ENCODE measurements at regions of chr7 and their contacts with region 1.

Region 1: GRCh38 chr7:74206589-74207120 is 3.2 kb upstream of the LAT2 start:
- DNase-seq: peak in 2 of 3 donors; percentile 67 to 75
- H3K4me3 ChIP-seq: peak overlapping the region in 4 of 7 experiments; percentile 25 to 72 (median 44)
- H3K27ac ChIP-seq: no peak overlapping the region
- H3K4me1 ChIP-seq: peaks cover 3 to 60% (median 47%) of the 10 kb centered on the region in 4 experiments
- H3K27me3 ChIP-seq: no peaks in the 10 kb centered on the region

Region 2: GRCh38 chr7:74068393-74069085 is 138.1 kb before region 1 on chr7:
- CTCF ChIA-PET with region 1: interaction called, 30 read pairs
- POLR2A ChIA-PET with region 1: no interaction called
- DNase-seq: no peak
- H3K4me3 ChIP-seq: no peak overlapping the region
- H3K27ac ChIP-seq: no peak overlapping the region
- H3K4me1 ChIP-seq: no peaks in the 10 kb centered on the region
- H3K27me3 ChIP-seq: no peaks in the 10 kb centered on the region

Region 3: GRCh38 chr7:74217455-74218342 is 11.0 kb after region 1 on chr7:
- CTCF ChIA-PET with region 1: interaction called, 31 read pairs
- POLR2A ChIA-PET with region 1: interaction called, 5 read pairs
- DNase-seq: peak; percentile 88 to 97 (median 96)
- H3K4me3 ChIP-seq: peak overlapping the region in 3 of 7 experiments; percentile 4 to 45 (median 30)
- H3K27ac ChIP-seq: peak overlapping the region; percentile 84 to 88
- H3K4me1 ChIP-seq: peaks cover 6 to 64% (median 58%) of the 10 kb centered on the region in 4 experiments
- H3K27me3 ChIP-seq: no peaks in the 10 kb centered on the region

Region 4: GRCh38 chr7:74236284-74236683 is 29.6 kb after region 1 on chr7:
- CTCF ChIA-PET with region 1: interaction called, 11 read pairs
- POLR2A ChIA-PET with region 1: no interaction called
- DNase-seq: no peak
- H3K4me3 ChIP-seq: no peak overlapping the region
- H3K27ac ChIP-seq: no peak overlapping the region
- H3K4me1 ChIP-seq: peaks cover 0 to 10% (median 3%) of the 10 kb centered on the region in 4 experiments
- H3K27me3 ChIP-seq: no peaks in the 10 kb centered on the region

Region 5: DNA sequence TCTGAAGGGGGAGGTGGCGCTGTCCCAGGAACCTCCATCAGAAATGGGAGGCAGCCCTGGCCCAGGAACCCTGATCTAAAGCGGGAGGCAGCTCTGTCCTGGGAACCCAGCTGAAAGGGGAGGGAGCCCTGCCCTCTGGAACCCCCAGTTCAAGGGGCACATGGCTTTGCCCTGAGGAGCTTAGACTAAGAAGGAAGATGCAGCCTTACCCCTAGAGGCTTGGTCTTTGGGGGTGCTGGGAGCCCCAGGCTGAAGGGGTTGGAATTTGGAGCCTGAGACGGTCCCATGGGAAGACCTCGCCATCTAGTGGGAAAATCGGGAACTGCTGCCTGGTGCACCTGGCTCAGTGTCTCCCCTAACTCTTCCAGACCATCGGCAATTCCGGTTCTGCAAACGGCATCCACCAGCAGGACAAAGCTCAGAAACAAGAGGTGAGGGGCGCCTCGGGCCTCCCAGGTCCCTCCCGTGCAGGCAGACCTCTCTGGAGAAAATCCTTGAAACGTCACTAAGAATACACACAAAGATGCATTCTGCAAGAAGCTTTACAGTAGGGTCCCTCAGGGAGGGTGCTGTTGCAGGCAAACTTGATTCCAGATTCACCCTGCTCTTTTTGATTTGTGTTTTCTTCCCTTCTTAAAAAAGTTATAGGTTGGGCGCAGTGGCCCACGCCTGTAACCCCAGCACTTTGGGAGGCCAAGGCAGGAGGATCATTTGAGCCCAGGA is 194.6 kb after region 1 on chr7:
- CTCF ChIA-PET with region 1: interaction called, 65 read pairs
- POLR2A ChIA-PET with region 1: interaction called, 3 read pairs
- DNase-seq: peak; percentile 55 to 78 (median 67)
- H3K4me3 ChIP-seq: no peak overlapping the region
- H3K27ac ChIP-seq: no peak overlapping the region
- H3K4me1 ChIP-seq: no peaks in the 10 kb centered on the region
- H3K27me3 ChIP-seq: no peaks in the 10 kb centered on the region

Region 6: GRCh38 chr7:74993121-74993520 is 786.5 kb after region 1 on chr7:
- CTCF ChIA-PET with region 1: no interaction called
- POLR2A ChIA-PET with region 1: no interaction called
- DNase-seq: no peak
- H3K4me3 ChIP-seq: no peak overlapping the region
- H3K27ac ChIP-seq: no peak overlapping the region
- H3K4me1 ChIP-seq: peaks cover 0 to 9% (median 5%) of the 10 kb centered on the region in 4 experiments
- H3K27me3 ChIP-seq: no peaks in the 10 kb centered on the region